GM13976 (cell line): ENCODE measurements at regions of chr3 and their contacts with region 1.

Region 1: GRCh38 chr3:27659279-27660021 is 62.7 kb downstream of the EOMES start:
- DNase-seq: peak; percentile 47
- CTCF ChIP-seq: peak; percentile 70

Region 2: DNA sequence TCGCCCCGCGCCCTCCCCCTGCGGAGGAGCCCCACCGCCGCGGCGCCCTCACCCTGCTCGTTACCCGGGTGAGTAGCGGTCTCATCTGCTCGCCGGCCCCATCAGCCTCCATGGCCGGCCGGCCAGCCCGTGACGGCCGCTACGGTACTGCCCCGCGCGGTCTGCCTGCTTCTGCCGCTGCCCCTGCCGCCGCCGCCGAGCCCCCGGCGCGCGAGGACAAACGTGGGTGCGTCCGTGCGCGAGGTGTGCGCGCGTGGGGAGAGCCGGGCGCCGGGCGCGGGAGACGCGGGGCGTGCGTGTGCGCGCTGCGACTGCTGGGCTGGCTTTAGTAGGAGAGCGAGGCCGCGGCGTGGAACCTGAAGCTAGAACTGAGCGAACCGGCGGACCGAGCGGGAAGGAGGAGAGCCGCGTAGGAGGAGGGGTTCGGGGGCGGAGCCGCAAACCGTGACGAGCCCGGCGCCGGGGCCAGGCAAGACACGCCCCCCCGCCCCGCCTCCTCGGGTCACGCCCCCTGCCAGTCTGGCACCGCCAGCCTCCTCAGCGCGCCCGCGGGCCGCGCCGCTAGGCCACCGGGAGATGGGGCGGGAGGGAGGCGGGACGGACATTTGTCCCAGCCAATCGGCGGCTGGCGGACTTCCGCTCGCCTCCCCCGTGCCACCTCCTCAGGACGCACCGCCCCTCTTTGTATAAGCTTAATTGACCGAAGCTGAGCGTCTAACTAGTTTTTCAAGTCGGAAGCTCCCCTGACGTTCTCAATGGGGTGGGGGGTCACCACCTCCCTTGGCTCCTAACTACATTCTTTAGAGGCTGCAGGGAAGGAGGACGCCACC is 175.2 kb before region 1 on chr3 and contains the start of gene SLC4A7:
- in situ Hi-C with region 1: loop called (anchors 25 kb)
- DNase-seq: peak; percentile 97
- CTCF ChIP-seq: no peak

Region 3: GRCh38 chr3:27596334-27596841 is 63.1 kb before region 1 on chr3:
- in situ Hi-C with region 1: no loop called
- DNase-seq: peak; percentile 20
- CTCF ChIP-seq: no peak

Region 4: DNA sequence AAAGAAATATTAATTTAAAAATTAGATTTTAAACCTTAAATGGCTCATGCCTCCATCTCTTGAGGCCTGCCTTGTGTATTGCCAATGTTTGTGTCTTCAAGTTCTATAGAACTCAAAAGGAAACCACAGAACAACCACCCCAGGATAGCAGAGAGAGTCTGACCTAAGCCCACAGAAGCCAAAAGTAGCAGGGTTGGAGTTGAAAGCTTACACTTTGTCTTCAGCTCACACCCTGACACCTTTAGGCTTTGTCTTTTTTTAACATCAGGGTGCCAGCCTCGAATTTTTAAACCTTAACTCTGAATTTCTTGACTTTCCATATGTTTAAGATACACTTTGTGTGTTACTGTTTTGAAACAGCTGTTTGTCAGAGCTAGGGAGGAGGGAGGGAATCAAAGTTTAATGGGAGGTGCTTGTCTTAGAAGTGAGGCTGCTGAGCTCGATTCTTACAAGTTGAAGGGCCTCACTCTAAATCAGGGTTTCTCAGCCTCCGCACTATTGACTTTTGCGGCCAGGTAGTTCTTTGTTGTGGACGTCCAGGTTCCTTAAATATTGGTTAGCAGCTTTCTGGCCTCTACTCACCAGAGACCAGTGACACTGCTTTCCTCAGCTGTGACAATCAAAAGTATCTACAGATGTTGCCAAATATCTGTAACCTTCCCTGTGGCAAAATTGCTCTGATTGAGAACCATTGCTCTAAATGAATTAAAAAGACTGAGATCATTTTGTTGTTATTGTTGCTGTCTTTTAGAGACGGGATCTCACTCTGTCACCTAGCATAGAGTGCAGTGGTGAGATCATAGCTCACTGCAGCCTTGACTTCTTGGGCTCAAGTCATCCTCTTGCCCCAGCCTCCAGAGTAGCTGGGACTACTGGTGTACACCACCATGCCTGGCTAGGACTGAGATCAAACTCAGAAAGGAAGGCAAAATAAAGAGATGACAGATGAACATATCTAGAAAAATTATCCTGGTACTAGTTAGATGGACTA is 201.9 kb after region 1 on chr3:
- in situ Hi-C with region 1: no loop called
- DNase-seq: no peak
- CTCF ChIP-seq: no peak

Region 5: GRCh38 chr3:27914199-27914598 is 254.7 kb after region 1 on chr3:
- in situ Hi-C with region 1: no loop called
- DNase-seq: no peak
- CTCF ChIP-seq: no peak